Activated T-helper 2 cell treated with anti-CD3 and anti-CD28 coated beads, Interferon-gamma antibody, Interleukin-2, Interleukin-4, amounts not matched to agents 10 μg/mL and 5 μg/mL and 100 μg/mL, durations not matched to agents 14 hours and 24 hours and 36 hours (primary cell): ENCODE measurements at regions of chr9 and their contacts with region 1.

Region 1: DNA sequence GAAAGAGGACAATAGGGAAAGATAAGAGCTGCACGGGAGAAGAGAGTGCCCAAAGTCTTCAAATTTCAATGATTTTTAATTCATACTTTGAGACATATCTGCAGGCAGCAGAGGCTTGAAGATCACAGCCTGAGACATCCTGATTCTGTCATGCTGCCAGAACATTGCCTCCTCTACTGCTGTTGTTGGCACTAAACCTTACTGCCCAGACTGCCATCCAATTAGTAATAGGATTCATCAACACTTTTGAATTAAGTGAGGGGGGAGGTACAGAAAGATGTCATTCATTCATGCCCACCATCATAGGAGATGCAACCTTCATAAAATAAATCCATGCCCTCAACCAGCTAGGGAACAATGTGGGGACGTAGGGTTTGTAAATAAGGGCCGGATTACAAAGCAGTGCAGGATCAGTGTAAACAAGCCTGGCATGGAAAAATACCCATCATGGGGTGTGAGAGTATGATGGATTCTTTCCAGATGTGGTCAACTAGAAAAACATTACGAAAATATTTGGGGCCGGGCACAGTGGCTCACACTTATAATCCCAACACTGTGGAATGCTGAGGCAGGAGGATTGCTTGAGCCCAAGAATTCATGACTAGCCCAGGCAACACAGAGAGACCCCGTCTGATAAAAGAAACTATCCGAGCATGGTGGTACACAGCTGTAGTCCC is 122.1 kb upstream of the DAPK1 start:
- DNase-seq: no peak
- H3K4me3 Mint-ChIP-seq: no peak overlapping the region
- H3K27ac Mint-ChIP-seq: no peak overlapping the region
- H3K4me1 Mint-ChIP-seq: peaks cover 11% of the 10 kb centered on the region
- H3K27me3 Mint-ChIP-seq: peaks cover 10% of the 10 kb centered on the region

Region 2: DNA sequence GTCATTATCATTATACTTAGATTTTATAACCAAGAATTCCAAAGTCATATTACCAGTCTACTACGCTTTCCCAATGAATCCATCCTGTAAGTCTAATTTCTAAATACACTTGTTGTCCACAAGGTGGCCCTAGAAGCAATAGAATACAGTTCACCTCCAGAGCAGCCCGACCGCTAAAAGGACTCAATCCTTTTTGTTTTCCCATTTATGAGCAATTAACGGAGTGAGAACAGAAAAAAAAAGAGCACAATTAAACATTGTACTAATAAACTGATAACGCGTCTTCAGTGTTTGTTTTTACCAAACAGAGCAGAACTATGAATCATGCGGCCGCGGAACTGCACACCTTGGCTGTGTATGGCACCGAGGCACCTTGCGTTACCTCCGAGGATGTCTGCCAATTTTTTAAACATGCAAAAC is 38.6 kb before region 1 on chr9:
- intact Hi-C with region 1: no loop called
- DNase-seq: no peak
- H3K4me3 Mint-ChIP-seq: peak overlapping the region; percentile 65
- H3K27ac Mint-ChIP-seq: no peak overlapping the region
- H3K4me1 Mint-ChIP-seq: peaks cover 8% of the 10 kb centered on the region
- H3K27me3 Mint-ChIP-seq: peaks cover 27% of the 10 kb centered on the region

Region 3: GRCh38 chr9:87445646-87446045 is 70.1 kb after region 1 on chr9:
- intact Hi-C with region 1: no loop called
- DNase-seq: no peak
- H3K4me3 Mint-ChIP-seq: no peak overlapping the region
- H3K27ac Mint-ChIP-seq: no peak overlapping the region
- H3K4me1 Mint-ChIP-seq: peaks cover 2% of the 10 kb centered on the region
- H3K27me3 Mint-ChIP-seq: peaks cover 2% of the 10 kb centered on the region

Region 4: GRCh38 chr9:87464110-87464965 is 88.8 kb after region 1 on chr9:
- intact Hi-C with region 1: loop called (anchors 1 kb)
- DNase-seq: no peak
- H3K4me3 Mint-ChIP-seq: peak overlapping the region; percentile 39
- H3K27ac Mint-ChIP-seq: peak overlapping the region; percentile 92
- H3K4me1 Mint-ChIP-seq: peaks cover 18% of the 10 kb centered on the region
- H3K27me3 Mint-ChIP-seq: no peaks in the 10 kb centered on the region

Region 5: GRCh38 chr9:87535817-87536539 is 160.4 kb after region 1 on chr9:
- intact Hi-C with region 1: loop called (anchors 1 kb)
- DNase-seq: peak; percentile 31
- H3K4me3 Mint-ChIP-seq: peak overlapping the region; percentile 16
- H3K27ac Mint-ChIP-seq: peak overlapping the region; percentile 97
- H3K4me1 Mint-ChIP-seq: peaks cover 23% of the 10 kb centered on the region
- H3K27me3 Mint-ChIP-seq: no peaks in the 10 kb centered on the region

Region 6: DNA sequence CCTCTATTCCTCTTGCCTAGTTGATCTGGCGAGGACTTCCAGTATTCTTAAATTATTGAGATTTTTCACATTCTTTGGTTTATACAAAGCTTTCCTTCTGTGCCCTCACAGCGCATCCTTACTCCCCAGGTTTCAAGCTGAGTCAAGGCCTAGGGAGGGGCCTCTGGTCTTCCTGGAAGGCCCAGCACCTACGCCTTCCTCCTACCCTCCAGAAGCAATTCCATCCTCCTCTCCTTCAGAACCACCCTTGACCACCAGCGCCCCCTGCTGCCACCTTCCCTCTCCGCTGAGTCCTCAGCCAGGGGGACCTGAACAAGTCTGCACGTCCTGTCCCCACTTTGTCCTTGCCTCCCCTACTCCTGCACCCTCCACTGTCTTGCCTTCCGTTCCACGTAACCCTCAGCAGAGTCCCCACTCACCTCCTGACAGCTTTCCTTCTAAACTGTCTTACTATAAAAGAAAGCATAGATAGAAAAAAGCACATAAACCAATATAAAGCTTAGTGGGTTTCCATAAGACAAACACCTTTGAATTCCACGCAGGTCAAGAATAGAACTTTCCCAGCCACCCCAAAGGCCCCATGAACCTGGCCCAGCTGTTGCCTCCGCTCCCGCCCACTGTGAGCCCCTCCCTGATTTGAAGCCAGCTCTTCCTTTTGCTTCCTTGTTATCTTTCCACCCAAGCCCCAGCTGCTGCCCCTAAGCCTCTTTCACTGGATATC is 287.4 kb after region 1 on chr9:
- intact Hi-C with region 1: loop called (anchors 1 kb)
- DNase-seq: peak; percentile 31
- H3K4me3 Mint-ChIP-seq: no peak overlapping the region
- H3K27ac Mint-ChIP-seq: no peak overlapping the region
- H3K4me1 Mint-ChIP-seq: peaks cover 7% of the 10 kb centered on the region
- H3K27me3 Mint-ChIP-seq: no peaks in the 10 kb centered on the region

Region 7: DNA sequence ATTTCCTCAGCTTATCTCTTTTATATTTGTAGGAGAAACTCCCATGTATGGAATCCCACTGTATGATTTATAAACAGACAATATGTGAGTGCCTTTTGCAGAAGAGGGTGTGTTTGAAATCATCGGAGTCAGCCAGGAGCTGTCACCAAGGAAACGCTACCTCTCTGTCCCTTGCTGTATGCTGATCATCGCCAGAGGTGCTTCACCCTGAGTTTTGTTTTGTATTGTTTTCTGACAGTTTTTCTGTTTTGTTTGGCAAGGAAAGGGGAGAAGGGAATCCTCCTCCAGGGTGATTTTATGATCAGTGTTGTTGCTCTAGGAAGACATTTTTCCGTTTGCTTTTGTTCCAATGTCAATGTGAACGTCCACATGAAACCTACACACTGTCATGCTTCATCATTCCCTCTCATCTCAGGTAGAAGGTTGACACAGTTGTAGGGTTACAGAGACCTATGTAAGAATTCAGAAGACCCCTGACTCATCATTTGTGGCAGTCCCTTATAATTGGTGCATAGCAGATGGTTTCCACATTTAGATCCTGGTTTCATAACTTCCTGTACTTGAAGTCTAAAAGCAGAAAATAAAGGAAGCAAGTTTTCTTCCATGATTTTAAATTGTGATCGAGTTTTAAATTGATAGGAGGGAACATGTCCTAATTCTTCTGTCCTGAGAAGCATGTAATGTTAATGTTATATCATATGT is 332.4 kb after region 1 on chr9:
- intact Hi-C with region 1: loop called (anchors 2 kb)
- DNase-seq: no peak
- H3K4me3 Mint-ChIP-seq: no peak overlapping the region
- H3K27ac Mint-ChIP-seq: no peak overlapping the region
- H3K4me1 Mint-ChIP-seq: peaks cover 26% of the 10 kb centered on the region
- H3K27me3 Mint-ChIP-seq: peaks cover 13% of the 10 kb centered on the region